ENCODE measurements at regions of chr11 and their contacts with region 1.

Region 1: GRCh38 chr11:44286268-44286880 is 23.6 kb downstream of the ALX4 start:
- DNase-seq: peak; percentile 55
- ATAC-seq: peak; percentile 79
- H3K4me3 Mint-ChIP-seq: no peak overlapping the region
- H3K27ac Mint-ChIP-seq: peak overlapping the region; percentile 16
- H3K4me1 Mint-ChIP-seq: no peaks in the 10 kb centered on the region
- H3K27me3 Mint-ChIP-seq: peaks cover 16% of the 10 kb centered on the region
- CTCF ChIP-seq: peak; percentile 44

Region 2: GRCh38 chr11:44464741-44465140 is 178.4 kb after region 1 on chr11:
- CTCF ChIA-PET with region 1: no interaction called
- POLR2A ChIA-PET with region 1: no interaction called
- intact Hi-C with region 1: loop called (anchors 1 kb)
- DNase-seq: no peak
- ATAC-seq: no peak
- H3K4me3 Mint-ChIP-seq: no peak overlapping the region
- H3K27ac Mint-ChIP-seq: no peak overlapping the region
- H3K4me1 Mint-ChIP-seq: no peaks in the 10 kb centered on the region
- H3K27me3 Mint-ChIP-seq: peaks cover 5% of the 10 kb centered on the region
- CTCF ChIP-seq: no peak

Region 3: DNA sequence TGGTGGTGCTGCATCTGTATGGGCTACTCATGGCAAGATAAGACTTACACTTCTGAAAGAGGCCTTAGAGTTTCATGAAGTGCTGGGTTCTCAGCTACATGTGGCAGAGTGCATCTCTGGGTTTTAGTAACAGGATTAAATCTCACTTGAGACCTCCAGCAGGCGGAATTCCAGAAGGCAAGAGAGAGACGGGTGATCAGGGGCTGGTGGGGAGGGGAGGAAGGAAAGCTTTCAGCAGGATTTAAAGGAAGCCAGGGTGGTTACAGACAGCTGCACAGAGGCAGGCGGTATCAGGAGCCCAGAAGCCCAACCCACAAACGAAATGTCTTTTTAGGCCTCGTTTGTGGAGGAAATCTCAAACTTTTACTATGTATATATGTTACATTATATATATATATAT is 222.9 kb after region 1 on chr11:
- CTCF ChIA-PET with region 1: no interaction called
- POLR2A ChIA-PET with region 1: no interaction called
- intact Hi-C with region 1: no loop called
- DNase-seq: no peak
- ATAC-seq: no peak
- H3K4me3 Mint-ChIP-seq: no peak overlapping the region
- H3K27ac Mint-ChIP-seq: no peak overlapping the region
- H3K4me1 Mint-ChIP-seq: no peaks in the 10 kb centered on the region
- H3K27me3 Mint-ChIP-seq: peaks cover 12% of the 10 kb centered on the region
- CTCF ChIP-seq: no peak

Region 4: GRCh38 chr11:44519989-44520737 is 233.8 kb after region 1 on chr11:
- CTCF ChIA-PET with region 1: interaction called, 5 read pairs
- POLR2A ChIA-PET with region 1: no interaction called
- intact Hi-C with region 1: loop called (anchors 1 kb)
- DNase-seq: no peak
- ATAC-seq: no peak
- H3K4me3 Mint-ChIP-seq: no peak overlapping the region
- H3K27ac Mint-ChIP-seq: no peak overlapping the region
- H3K4me1 Mint-ChIP-seq: no peaks in the 10 kb centered on the region
- H3K27me3 Mint-ChIP-seq: peaks cover 30% of the 10 kb centered on the region
- CTCF ChIP-seq: no peak

Region 5: DNA sequence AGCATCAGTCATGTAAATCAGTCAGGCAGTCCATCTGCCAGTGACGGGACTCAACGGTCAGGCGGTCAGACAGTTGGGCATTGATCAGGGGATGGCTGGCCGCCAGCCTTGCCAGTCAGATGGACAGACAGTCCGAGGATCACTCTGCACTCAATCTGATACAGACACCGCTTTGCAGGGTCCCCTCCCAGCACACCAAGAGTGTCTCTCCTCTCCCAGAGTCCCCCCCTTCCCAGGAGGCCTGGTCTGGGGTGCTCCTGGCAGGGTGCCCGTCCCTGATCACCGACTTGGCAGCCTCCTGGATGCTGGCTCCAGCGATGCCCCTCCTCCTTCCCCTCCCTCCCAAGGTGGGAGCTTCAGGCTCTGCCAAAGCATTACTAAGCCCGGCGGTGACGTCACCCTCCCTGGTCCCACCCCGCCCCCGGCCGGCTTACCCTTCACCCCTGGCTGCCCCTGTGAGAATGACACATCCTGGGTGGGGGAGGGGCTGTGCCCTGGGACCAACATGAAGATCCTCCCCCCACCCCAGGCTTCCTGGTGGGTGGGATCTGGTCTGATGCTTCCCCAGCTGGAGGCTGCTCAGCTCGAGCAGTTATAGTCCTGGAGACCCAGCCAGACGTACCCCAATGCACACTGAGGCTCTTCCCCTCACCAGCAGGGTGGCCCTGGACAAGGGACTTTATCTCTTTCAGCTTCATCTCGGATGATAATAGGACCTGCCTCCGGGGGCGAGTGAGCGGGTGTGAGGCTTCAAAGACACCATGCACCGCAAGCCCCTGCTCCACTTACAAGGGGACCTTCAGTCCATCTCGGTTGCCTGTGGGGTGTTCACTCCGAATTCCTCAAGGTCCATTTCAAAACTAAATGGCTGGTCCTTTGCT is 348.3 kb after region 1 on chr11:
- CTCF ChIA-PET with region 1: no interaction called
- POLR2A ChIA-PET with region 1: no interaction called
- intact Hi-C with region 1: loop called (anchors 5 kb)
- DNase-seq: no peak
- ATAC-seq: peak; percentile 60
- H3K4me3 Mint-ChIP-seq: no peak overlapping the region
- H3K27ac Mint-ChIP-seq: no peak overlapping the region
- H3K4me1 Mint-ChIP-seq: peaks cover 7% of the 10 kb centered on the region
- H3K27me3 Mint-ChIP-seq: peaks cover 23% of the 10 kb centered on the region
- CTCF ChIP-seq: no peak